Head of caudate nucleus (tissue), 42 donors: ENCODE measurements at regions of chr11 and their contacts with region 1.

Region 1: DNA sequence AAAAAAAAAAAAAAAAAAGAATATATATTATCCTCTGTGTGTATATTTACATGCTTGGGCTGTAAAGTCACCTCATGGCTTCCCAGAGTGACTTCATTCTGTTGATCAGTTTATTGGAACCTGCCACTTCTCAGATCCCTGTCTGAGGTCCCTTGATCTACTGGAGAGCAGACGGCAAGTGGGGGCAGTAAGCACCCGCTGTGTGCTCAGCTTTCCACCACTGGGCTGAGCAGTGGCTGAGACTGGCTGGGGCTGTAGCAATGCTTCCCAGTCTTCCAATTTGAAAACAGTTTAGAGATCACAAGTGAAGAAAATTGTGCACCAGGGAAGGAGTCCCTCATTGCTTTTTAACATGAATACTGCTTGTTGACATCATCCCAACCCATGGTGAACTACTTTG is 6.9 kb upstream of the RBM4B start:
- DNase-seq: no peak

Region 2: GRCh38 chr11:66579017-66579606 is 105.5 kb before region 1 on chr11:
- intact Hi-C with region 1: loop called (anchors 5 kb)
- DNase-seq: peak; percentile 67 to 93 (median 83)

Region 3: DNA sequence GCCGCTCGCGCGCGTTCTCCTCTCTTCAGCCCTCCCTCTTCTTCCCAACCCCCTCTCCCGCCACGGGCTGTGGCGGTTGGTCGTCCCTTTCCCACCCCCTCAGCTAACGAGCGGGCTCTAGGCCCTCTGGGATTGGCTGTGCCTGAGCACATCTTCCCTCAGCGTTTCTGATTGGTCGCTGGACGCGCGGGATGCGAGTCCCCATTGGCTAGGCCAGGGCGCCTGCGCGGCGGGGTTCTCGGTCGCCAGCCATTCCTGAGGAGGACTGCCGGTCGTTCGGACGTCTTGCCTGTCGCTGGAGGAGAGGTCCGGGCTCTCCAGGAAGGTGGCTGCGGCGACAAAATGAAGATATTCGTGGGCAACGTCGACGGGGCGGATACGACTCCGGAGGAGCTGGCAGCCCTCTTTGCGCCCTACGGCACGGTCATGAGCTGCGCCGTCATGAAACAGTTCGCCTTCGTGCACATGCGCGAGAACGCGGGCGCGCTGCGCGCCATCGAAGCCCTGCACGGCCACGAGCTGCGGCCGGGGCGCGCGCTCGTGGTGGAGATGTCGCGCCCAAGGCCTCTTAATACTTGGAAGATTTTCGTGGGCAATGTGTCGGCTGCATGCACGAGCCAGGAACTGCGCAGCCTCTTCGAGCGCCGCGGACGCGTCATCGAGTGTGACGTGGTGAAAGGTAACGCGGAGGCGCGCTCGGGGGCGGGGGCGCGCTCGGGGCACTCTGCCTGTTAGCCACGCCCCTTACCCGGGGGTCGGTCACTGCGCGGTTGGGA is 68.1 kb before region 1 on chr11 and contains the start of gene RBM14:
- intact Hi-C with region 1: no loop called
- DNase-seq: peak; percentile 96 to 100 (median 99)